ENCODE measurements at regions of chr17 and their contacts with region 1.

Region 1: GRCh38 chr17:27293898-27294688 is at the start of gene WSB1:
- DNase-seq: peak; percentile 96 to 98
- ATAC-seq: peak; percentile 97
- H3K4me3 ChIP-seq: peak within 1 kb of the TSS; percentile 64 to 98
- H3K27ac ChIP-seq: peak within 1 kb of the TSS; percentile 85 to 100
- H3K4me1 ChIP-seq: no peaks in the 10 kb centered on the region
- H3K27me3 ChIP-seq: no peaks in the 10 kb centered on the region
- total RNA-seq, gene WSB1: 320 to 355 TPM

Region 2: DNA sequence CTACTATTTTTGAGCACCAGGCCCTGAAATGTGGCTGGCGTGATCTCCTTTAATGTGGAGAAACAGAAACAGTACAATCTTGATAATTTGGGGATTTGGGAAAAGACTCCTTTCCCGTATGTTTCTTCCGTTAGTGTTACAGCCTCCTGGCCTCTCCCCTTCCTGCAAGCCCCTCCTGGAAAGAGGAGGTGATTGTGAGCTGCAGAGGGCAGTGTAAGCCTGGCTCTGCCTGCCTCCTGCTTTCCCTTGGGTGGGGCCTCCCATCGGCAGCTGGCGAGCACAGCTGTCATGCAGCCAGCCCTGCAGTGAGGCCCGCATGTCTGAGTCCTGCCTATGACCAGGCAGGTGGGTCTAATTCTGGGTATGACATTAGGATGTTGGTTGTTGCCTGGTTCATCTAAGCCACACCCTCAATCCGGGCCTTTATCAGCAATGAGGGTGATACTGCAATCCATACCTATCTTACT is 48.8 kb before region 1 on chr17:
- intact Hi-C with region 1: loop called (anchors 2 to 5 kb)
- DNase-seq: peak; percentile 93 to 94
- ATAC-seq: peak; percentile 95
- H3K4me3 ChIP-seq: no peak overlapping the region
- H3K27ac ChIP-seq: peak overlapping the region; percentile 30 to 63
- H3K4me1 ChIP-seq: no peaks in the 10 kb centered on the region
- H3K27me3 ChIP-seq: no peaks in the 10 kb centered on the region

Region 3: GRCh38 chr17:27256225-27257030 is 37.7 kb before region 1 on chr17:
- intact Hi-C with region 1: loop called in 1 of 2 experiments (anchors 5 kb)
- DNase-seq: no peak
- ATAC-seq: peak; percentile 57
- H3K4me3 ChIP-seq: no peak overlapping the region
- H3K27ac ChIP-seq: peak overlapping the region in 1 of 2 donors; percentile 63
- H3K4me1 ChIP-seq: no peaks in the 10 kb centered on the region
- H3K27me3 ChIP-seq: no peaks in the 10 kb centered on the region

Region 4: DNA sequence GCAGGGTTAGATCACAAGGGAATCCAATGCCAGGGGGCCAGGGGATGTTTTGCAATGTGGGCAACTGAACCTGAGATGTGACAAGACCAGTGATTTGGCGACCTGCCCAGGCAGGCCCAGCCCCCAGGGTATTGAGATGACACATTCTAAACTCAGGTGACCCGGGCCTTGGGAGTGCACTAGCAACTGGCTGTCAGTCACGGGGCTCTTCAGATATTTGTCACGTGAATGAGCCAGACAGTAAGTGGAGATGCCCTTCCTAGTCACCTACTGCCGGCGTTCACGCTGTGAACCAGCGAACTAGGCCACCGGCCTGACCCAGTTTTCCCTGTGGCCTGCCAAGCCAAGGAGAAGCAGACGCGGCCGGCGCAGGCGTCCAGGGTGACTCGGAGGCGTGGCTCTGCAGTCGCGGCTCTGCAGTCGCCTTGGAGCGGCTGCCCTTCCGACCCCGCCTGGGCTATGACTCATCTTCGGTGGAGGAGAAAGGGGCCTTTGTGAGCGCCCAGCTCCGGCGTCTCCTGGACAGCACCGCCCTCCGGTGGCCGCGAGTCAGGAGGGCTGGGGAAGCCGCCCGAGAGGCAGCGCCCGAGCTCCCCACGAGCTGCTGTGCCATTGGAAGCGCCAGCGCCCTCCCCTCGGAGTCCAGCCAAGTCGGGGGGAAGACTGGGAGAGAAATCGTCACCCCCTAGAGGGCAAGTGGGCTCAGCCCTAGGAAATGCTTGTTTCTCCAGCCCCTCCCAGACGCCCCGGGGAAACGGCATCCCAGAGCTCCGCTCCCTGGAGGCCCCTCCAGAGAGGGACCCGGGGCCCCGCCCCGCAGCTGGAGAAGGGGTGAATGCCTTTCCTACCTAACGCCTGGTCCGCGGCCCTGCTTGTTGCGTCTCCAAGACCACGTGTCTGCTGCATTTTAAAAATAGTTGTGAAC is 38.7 kb after region 1 on chr17:
- intact Hi-C with region 1: loop called (anchors 2 to 5 kb)
- DNase-seq: peak; percentile 100
- ATAC-seq: peak; percentile 99
- H3K4me3 ChIP-seq: peak overlapping the region; percentile 25 to 30
- H3K27ac ChIP-seq: peak overlapping the region in 1 of 2 donors; percentile 92
- H3K4me1 ChIP-seq: no peaks in the 10 kb centered on the region
- H3K27me3 ChIP-seq: no peaks in the 10 kb centered on the region